ENCODE measurements at regions of chr10 and their contacts with region 1.

Region 1: DNA sequence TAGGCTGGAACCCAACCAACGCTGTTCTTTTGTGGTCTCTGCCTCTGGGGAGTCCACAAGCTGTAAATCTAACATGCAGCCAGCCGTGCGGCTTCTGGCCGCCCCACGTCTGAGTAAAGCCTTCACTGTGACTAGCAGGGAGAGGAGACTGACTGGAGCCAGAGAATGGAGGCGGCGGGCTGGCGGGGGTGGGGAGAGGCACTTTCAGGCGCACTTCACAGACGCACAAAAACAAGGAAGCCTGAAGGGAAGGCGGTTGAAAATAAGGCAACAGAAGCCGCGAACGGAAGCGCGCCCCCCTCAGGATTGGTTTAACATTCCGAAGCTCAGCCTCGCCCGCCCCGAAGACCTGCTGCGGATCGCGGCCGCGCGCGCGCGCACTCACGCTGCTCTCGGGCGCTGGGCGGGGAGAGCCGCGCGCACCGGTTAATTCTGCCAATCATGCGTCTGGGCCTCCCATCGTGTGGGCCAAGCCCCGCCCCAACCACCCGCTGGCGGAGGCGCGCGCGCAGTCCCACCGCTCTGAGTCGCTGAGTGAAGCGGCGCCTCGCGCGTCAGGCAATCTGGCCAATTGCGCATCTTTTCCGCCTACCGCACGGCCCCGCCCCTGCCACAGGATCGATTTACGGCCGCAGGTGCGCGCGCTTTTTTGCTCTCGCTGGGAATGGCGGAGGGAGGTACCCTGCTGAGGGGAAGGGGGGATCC is at the start of gene SFR1:
- DNase-seq: peak; percentile 99
- H3K4me3 ChIP-seq: peak within 1 kb of the TSS; percentile 69 to 84 (median 78)
- H3K27ac ChIP-seq: peak within 1 kb of the TSS; percentile 96 to 98 (median 98)
- H3K4me1 ChIP-seq: peaks cover 0 to 13% (median 8%) of the 10 kb centered on the region in 4 donors
- H3K27me3 ChIP-seq: no peaks in the 10 kb centered on the region
- CTCF ChIP-seq: peak in 3 of 4 experiments; percentile 23 to 41 (median 37)
- EP300 ChIP-seq: peak in 1 of 4 donors; percentile 13
- POLR2A ChIP-seq: peak; percentile 66 to 73
- total RNA-seq, gene SFR1: 6.1 to 13.9 (median 10.5) TPM

Region 2: GRCh38 chr10:103888113-103888841 is 233.4 kb before region 1 on chr10:
- intact Hi-C with region 1: loop called (anchors 5 kb)
- DNase-seq: peak; percentile 89
- H3K4me3 ChIP-seq: no peak overlapping the region
- H3K27ac ChIP-seq: peak overlapping the region; percentile 52 to 79 (median 70)
- H3K4me1 ChIP-seq: peaks cover 0 to 19% (median 13%) of the 10 kb centered on the region in 4 donors
- H3K27me3 ChIP-seq: no peaks in the 10 kb centered on the region
- CTCF ChIP-seq: peak; percentile 81 to 95 (median 85)
- EP300 ChIP-seq: no peak
- POLR2A ChIP-seq: no peak

Region 3: DNA sequence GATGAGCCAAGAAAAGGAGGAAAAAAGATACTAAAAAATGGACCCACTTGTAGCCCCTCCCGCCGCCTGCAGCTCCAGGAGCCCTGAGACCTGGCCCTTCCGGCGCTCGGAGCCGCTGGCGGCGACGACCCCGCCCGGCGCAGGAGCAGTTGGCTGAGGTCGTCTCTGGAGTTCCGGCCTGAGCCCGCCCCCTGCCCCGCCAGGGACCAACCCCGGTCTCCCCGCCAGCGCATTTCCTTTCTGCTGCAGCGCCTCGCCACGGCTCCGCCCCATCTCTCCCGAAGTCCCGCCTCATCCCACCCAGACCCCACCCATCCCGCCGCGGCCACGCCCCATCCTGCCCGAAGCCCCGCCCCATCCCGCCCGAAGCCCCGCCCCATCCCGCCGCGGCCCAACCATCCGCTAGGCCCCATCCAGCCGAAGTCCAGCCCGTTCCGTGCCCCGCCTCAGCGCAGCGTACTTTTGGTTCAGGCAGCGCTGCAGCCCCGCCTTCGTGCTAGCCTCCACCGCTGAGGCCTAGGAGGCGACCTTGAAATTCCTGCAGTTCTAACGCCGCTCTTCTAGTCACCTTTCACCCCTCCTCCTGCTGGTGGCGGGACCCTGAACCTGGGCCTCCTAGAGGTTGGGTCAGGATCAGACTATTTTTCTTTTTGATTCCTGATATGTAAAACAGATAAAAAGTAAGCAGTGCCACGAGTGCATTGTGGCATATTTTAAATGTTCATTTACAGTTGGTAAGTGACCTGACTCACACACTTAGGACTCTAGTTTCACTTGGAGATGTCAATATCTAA is 203.4 kb before region 1 on chr10 and contains the start of gene STN1:
- intact Hi-C with region 1: loop called (anchors 1 kb)
- DNase-seq: peak; percentile 99
- H3K4me3 ChIP-seq: peak within 1 kb of the TSS; percentile 46 to 78 (median 70)
- H3K27ac ChIP-seq: peak within 1 kb of the TSS; percentile 91 to 97 (median 94)
- H3K4me1 ChIP-seq: peaks cover 0 to 31% (median 27%) of the 10 kb centered on the region in 4 donors
- H3K27me3 ChIP-seq: no peaks in the 10 kb centered on the region
- CTCF ChIP-seq: peak in 1 of 4 experiments; percentile 14
- EP300 ChIP-seq: peak in 1 of 4 donors; percentile 43
- POLR2A ChIP-seq: peak; percentile 90 to 96
- total RNA-seq, gene STN1: 16.0 to 22.5 (median 21.1) TPM

Region 4: DNA sequence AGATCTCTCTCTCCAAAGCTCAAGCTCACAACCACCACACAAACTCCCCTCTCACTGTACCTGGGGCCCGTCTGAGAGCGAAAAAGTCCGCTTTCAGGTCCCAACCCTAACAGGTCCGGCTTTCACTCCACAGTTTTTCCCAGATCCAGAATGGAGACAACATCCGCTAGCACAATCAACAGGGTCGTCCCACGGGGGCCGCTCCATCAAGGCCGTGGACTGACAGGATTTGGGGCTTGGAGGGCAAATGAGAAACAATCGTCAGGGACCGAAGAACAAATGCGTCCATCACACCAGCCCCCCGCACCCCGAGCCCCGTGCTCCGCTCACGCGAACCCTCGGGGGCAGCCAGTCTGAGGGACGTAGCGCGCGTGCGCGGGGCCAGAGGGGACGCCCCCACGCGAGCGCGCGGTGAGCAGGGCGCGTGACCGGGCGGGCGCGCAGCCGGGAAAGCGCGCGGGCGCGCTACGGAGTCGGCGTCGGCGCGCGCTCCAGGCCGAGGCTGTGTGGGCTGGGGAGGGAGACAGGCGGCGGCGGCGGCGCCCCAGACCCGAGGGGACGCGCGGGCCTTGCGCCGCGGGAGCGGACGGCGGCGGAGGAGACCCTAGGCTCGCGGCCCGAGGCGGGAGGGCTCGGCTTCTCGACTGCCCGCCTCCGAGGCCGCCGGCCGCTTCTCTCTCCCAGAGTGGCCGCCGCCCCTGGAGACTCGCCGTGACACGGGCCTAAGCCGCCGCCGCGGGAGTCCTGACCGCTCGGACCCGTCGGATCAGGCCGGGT is 154.8 kb before region 1 on chr10 and contains the start of gene SLK:
- intact Hi-C with region 1: loop called (anchors 1 kb)
- DNase-seq: peak; percentile 89
- H3K4me3 ChIP-seq: peak within 1 kb of the TSS; percentile 86 to 98 (median 94)
- H3K27ac ChIP-seq: peak within 1 kb of the TSS; percentile 97 to 99 (median 98)
- H3K4me1 ChIP-seq: peaks cover 0 to 35% (median 25%) of the 10 kb centered on the region in 4 donors
- H3K27me3 ChIP-seq: no peaks in the 10 kb centered on the region
- CTCF ChIP-seq: no peak
- EP300 ChIP-seq: no peak
- POLR2A ChIP-seq: peak in 1 of 2 donors; percentile 22
- total RNA-seq, gene SLK: 72.1 to 96.1 (median 76.5) TPM

Region 5: DNA sequence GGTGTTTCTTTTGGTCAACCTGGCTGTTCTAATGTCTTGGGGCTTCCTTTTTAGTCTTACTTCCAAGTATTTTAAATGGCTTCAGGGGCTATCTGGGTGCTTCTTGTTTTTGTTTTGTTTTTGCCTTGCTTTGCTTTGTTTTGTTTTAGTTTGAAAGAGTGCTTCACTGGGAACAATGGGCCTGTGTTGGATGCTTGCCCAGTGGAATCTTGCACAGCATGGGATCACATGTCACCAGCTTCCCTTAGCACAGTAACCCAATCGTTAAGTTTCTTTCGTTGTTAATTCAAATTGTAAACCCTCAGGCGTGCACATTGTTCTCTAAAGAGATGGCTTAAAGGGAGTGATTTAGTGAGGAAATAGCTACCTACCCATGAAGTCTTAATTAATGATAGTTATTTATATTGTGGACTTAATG is 44.9 kb before region 1 on chr10:
- intact Hi-C with region 1: no loop called
- DNase-seq: no peak
- H3K4me3 ChIP-seq: no peak overlapping the region
- H3K27ac ChIP-seq: no peak overlapping the region
- H3K4me1 ChIP-seq: no peaks in the 10 kb centered on the region
- H3K27me3 ChIP-seq: no peaks in the 10 kb centered on the region
- CTCF ChIP-seq: no peak
- EP300 ChIP-seq: no peak
- POLR2A ChIP-seq: no peak

Region 6: GRCh38 chr10:104150139-104150538 is 28.5 kb after region 1 on chr10:
- intact Hi-C with region 1: no loop called
- DNase-seq: no peak
- H3K4me3 ChIP-seq: no peak overlapping the region
- H3K27ac ChIP-seq: no peak overlapping the region
- H3K4me1 ChIP-seq: no peaks in the 10 kb centered on the region
- H3K27me3 ChIP-seq: peaks cover 0 to 12% (median 3%) of the 10 kb centered on the region in 3 donors
- CTCF ChIP-seq: no peak
- EP300 ChIP-seq: no peak
- POLR2A ChIP-seq: no peak

Region 7: GRCh38 chr10:104231784-104232612 is 110.3 kb after region 1 on chr10 and contains the start of gene CFAP43:
- intact Hi-C with region 1: loop called (anchors 2 kb)
- DNase-seq: peak; percentile 99
- H3K4me3 ChIP-seq: peak within 1 kb of the TSS; percentile 54 to 88 (median 79)
- H3K27ac ChIP-seq: peak within 1 kb of the TSS in 3 of 4 donors; percentile 31 to 47 (median 40)
- H3K4me1 ChIP-seq: peaks cover 0 to 15% (median 6%) of the 10 kb centered on the region in 4 donors
- H3K27me3 ChIP-seq: no peaks in the 10 kb centered on the region
- CTCF ChIP-seq: no peak
- EP300 ChIP-seq: no peak
- POLR2A ChIP-seq: no peak
- total RNA-seq, gene CFAP43: 0.36 to 0.83 (median 0.59) TPM

Region 8: DNA sequence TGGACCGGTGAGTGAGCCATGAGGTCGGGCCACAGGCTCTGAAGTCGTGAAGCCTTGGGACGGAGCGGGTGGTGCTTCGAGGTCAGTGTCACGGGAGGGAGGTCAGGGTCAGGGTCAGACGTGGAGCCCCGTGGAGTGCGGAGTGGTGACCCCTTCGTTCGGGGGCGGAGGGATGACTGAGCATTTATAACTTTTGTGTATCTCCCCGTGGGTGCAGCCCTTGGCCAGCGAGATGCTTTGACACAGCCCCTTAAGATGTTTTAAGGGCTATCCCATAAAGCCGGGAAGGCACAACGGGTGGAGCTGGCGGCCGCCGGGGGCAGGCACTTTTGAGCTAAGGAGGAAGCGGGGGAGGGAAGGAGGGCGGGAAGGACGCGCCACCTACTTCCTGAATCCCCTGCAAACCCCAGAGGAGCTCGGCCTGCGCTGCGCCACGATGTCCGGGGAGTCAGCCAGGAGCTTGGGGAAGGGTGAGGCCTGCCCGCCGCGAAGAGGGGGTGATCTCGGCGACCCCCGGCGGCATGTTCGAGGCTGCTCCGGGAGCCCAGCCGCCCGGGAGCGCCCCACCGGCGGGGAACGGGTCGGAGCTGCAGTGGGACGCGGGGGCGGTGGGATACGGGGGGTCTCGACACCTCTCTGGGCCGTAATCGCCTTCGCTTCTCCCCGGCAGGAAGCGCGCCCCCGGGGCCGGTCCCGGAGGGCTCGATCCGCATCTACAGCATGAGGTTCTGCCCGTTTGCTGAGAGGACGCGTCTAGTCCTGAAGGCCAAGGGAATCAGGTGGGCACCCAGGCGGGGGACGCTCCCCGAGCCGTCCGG is 133.0 kb after region 1 on chr10 and contains the start of gene GSTO1:
- intact Hi-C with region 1: loop called (anchors 1 kb)
- DNase-seq: peak; percentile 92
- H3K4me3 ChIP-seq: peak within 1 kb of the TSS; percentile 71 to 95 (median 84)
- H3K27ac ChIP-seq: peak within 1 kb of the TSS; percentile 95 to 98 (median 96)
- H3K4me1 ChIP-seq: peaks cover 0 to 36% (median 24%) of the 10 kb centered on the region in 4 donors
- H3K27me3 ChIP-seq: no peaks in the 10 kb centered on the region
- CTCF ChIP-seq: no peak
- EP300 ChIP-seq: no peak
- POLR2A ChIP-seq: peak; percentile 61 to 70
- total RNA-seq, gene GSTO1: 77.5 to 178 (median 131) TPM

Region 9: DNA sequence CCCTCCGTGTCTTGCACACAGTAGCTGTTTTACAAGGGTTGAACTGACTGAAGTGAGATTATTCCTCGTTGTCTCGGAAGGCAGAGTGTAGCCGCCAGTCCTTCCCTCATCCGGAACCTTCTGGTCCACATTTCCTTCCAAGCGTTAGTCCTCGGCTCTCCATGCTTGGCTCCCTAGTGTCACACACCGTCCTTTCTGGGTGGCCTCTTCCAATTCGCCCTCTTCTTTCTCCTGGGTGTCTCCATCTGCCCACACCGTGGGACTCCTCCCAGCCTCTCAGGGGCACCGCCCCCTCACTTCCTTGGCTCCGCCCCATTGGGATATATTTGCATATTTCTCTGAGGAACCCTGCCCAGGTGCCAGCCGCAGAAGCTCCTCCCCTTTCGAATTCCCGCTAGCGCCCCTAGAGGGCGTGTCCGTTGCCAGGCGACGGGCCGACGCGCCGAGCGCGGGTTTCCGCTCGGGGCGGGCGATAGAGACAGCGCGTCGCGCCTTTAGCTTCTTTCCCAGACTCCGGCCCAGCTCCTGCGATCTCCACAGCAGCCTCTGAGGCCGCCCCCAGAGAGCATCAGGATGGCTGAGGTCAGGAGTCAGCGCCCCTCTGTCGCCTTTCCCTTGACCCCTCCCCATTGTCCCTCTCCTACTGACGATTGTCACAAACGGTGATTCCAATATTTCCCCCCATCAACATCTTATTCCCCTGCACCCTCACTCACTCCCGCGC is 231.8 kb after region 1 on chr10 and contains the start of gene CFAP58:
- intact Hi-C with region 1: loop called (anchors 5 kb)
- DNase-seq: peak; percentile 94
- H3K4me3 ChIP-seq: peak within 1 kb of the TSS; percentile 13 to 45 (median 30)
- H3K27ac ChIP-seq: peak within 1 kb of the TSS in 1 of 4 donors; percentile 4
- H3K4me1 ChIP-seq: peaks cover 0 to 26% (median 17%) of the 10 kb centered on the region in 4 donors
- H3K27me3 ChIP-seq: no peaks in the 10 kb centered on the region
- CTCF ChIP-seq: peak; percentile 6 to 63 (median 38)
- EP300 ChIP-seq: no peak
- POLR2A ChIP-seq: no peak
- total RNA-seq, gene CFAP58: 0.36 to 1.1 (median 0.61) TPM

Measured in sigmoid colon (tissue), 7 donors.